Activated naive CD4-positive, alpha-beta T cell treated with anti-CD3 and anti-CD28 coated beads for 36 hours (primary cell): ENCODE measurements at regions of chr20 and their contacts with region 1.

Region 1: DNA sequence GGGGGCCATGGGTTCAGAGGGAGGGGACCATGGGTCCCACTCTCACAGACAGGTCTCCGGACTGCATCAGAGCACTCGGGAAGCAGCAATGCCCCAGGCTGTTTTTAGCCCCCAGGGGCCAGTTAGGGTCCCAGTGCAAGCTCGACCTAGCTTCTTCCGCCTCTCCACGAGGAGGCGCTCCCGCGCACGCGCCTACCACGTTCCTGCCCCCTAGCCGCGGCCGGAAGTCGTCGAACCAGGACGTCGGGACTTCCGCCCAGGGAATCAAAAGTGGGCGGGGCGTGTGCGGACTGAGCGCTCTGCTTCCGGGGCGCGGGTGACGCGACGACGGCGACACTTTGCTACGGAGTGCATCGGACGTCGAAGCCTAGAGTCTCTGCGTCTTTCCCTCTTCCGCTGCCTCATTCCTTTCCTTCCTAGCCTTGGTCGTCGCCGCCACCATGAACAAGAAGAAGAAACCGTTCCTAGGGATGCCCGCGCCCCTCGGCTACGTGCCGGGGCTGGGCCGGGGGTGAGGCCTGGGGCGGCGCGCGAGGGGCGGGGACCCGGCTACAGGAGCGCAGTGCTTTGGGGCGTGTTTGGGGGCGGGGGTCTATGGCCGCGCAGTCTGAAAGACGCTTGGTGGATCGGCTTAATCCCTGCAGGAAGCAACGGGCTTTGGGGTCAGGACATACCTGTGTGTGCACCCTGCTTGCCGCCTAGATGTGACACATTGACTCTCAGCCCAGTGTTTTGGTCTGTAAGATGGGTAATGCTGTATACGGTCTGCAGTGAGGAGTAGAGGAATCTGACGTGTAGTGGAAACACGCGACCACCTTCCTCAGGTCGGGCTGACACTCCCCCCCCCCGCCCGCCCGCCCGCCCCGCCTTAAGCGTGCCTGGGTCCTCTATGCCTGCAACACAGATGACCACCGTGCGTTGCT is at the start of gene PRPF6:
- DNase-seq: peak; percentile 97
- H3K4me3 Mint-ChIP-seq: peak within 1 kb of the TSS; percentile 84
- H3K27ac Mint-ChIP-seq: peak within 1 kb of the TSS; percentile 94
- H3K4me1 Mint-ChIP-seq: peaks cover 52% of the 10 kb centered on the region
- H3K27me3 Mint-ChIP-seq: no peaks in the 10 kb centered on the region
- total RNA-seq, gene PRPF6: 39.4 to 40.2 TPM

Region 2: GRCh38 chr20:63711085-63711645 is 269.9 kb before region 1 on chr20:
- CTCF ChIA-PET with region 1: no interaction called
- intact Hi-C with region 1: no loop called
- DNase-seq: no peak
- H3K4me3 Mint-ChIP-seq: no peak overlapping the region
- H3K27ac Mint-ChIP-seq: no peak overlapping the region
- H3K4me1 Mint-ChIP-seq: peaks cover 51% of the 10 kb centered on the region
- H3K27me3 Mint-ChIP-seq: no peaks in the 10 kb centered on the region

Region 3: GRCh38 chr20:63894358-63895201 is 86.5 kb before region 1 on chr20 and contains the start of gene DNAJC5:
- CTCF ChIA-PET with region 1: interaction called, 7 read pairs
- intact Hi-C with region 1: loop called (anchors 1 kb)
- DNase-seq: peak; percentile 94
- H3K4me3 Mint-ChIP-seq: peak within 1 kb of the TSS; percentile 95
- H3K27ac Mint-ChIP-seq: peak within 1 kb of the TSS; percentile 93
- H3K4me1 Mint-ChIP-seq: peaks cover 41% of the 10 kb centered on the region
- H3K27me3 Mint-ChIP-seq: no peaks in the 10 kb centered on the region
- total RNA-seq, gene DNAJC5: 19.4 to 19.5 TPM

Region 4: DNA sequence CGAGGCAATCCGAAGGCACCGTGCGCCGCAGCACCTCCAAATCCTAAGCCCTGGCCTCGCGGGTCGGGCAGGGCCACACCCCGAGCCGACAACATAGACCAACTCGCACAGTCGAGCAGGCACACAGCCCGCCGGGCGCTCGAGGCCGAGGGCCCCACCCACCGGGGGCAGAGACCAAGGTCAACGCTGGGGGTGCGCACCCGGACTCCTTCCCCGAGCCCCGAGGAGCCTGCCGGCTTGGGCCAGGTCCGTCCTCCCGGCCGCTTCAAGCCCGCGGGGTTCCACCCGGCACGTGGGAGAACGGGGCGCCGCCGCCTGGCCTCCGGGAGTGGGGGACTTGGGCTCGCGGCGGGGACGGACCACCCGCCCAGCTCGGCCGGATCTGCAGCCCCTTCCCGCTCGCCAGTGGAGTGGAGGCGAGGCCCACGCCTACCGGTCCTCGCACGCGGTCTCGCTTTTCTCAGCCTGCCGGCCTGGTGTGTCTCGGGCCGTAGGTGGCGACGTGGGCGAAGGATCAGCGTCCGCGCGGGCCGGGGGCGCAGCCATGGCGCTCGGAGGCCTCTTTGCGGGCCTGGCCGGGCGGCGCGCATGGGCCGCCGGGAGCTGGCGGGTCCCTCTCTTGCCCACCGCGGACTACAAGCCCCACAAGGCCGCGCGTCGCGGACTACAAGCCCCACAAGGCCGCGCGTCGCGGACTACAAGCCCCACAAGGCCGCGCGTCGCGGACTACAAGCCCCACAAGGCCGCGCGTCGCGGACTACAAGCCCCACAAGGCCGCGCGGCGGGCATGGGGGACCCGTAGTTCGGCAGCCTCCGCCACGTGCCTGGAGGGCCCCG is 25.0 kb before region 1 on chr20 and contains the start of gene UCKL1:
- CTCF ChIA-PET with region 1: interaction called, 4 read pairs
- intact Hi-C with region 1: loop called (anchors 1 kb)
- DNase-seq: peak; percentile 91
- H3K4me3 Mint-ChIP-seq: peak within 1 kb of the TSS; percentile 79
- H3K27ac Mint-ChIP-seq: peak within 1 kb of the TSS; percentile 85
- H3K4me1 Mint-ChIP-seq: peaks cover 39% of the 10 kb centered on the region
- H3K27me3 Mint-ChIP-seq: no peaks in the 10 kb centered on the region
- total RNA-seq, gene UCKL1: 23.3 to 23.9 TPM

Region 5: GRCh38 chr20:64062596-64063388 is 81.7 kb after region 1 on chr20 and contains the start of gene TCEA2:
- CTCF ChIA-PET with region 1: interaction called, 9 read pairs
- intact Hi-C with region 1: loop called (anchors 1 kb)
- DNase-seq: peak; percentile 98
- H3K4me3 Mint-ChIP-seq: peak within 1 kb of the TSS; percentile 89
- H3K27ac Mint-ChIP-seq: peak within 1 kb of the TSS; percentile 54
- H3K4me1 Mint-ChIP-seq: peaks cover 47% of the 10 kb centered on the region
- H3K27me3 Mint-ChIP-seq: no peaks in the 10 kb centered on the region
- total RNA-seq, gene TCEA2: 16.7 to 18.2 TPM

Region 6: DNA sequence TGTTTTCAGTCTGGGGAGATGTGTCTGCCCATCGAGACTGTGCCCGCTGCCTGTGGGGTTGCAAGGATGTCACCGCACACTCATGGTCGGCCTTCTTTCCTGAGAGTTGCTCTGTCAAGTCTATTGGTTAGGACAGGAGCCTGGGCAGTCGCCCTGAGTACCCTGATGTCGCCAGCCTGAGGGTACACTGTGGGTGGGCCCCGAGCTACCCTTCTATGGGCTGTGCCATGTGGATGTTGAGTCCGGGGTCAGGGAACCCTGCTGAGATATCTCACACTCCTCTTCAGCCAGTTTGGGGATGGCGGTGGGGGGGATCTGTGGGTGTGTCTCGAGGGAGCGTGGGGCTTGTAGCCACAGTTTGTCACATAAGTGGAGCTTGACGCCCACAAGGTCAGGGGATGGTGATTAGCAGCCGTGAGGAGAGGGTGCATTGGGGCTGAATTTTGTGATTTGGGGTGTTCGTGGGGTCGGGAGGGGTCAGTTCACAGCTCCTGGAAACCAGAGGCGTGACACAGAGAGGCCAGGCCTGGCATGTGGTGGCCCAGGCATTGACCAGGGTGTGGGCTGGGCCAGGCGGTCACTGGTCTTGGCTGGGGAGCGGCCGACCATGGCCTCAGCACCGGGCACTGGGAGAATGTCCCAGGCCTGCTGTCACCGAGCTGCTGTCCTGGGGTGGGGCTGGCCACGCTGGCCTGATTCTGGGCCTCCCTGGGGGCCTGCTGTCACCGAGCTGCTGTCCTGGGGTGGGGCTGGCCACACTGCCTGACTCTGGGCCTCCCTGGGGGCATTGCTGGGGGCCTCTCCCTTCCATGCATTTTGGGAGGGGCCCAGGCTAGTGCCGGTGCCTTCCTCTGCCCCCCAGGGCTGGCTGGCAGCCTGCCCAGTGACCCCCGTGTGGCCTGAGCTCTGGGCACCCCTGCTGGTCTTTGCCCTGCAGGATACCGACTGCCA is 127.9 kb after region 1 on chr20:
- CTCF ChIA-PET with region 1: no interaction called
- intact Hi-C with region 1: no loop called
- DNase-seq: no peak
- H3K4me3 Mint-ChIP-seq: no peak overlapping the region
- H3K27ac Mint-ChIP-seq: no peak overlapping the region
- H3K4me1 Mint-ChIP-seq: no peaks in the 10 kb centered on the region
- H3K27me3 Mint-ChIP-seq: no peaks in the 10 kb centered on the region

Region 7: DNA sequence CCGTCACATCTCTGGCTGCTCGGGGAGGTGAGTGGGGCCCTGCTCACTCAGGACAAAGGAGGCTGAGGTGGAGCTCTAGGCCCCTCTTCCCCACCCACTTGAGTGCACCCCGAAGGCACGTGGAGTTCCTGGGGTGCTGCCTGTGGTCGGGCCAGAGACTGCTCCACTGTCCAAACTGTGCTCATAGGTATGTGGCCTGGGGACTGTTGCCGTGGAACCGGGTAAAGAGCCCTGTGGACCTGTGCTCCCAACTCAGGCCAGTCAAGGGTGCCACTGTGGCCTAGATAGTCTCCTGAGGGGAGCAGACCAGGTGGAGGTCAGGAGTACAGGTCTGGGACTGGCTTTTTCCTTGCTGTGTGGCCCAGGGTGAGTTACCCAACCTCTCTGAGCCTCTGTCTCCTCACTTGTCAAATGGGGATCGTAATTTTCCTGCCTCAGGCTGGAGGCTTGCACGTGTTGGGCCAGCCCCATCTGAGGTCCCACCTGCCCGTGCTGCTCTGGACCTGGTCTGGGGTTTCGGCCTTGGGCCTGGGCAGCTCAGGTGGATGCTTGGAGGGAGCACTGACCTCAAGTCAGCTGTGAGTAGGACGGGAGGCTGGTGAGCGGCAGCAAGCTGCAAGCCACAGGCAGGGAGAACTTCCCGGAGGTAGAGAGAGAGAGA is 138.7 kb after region 1 on chr20:
- CTCF ChIA-PET with region 1: interaction called, 9 read pairs
- intact Hi-C with region 1: loop called (anchors 1 kb)
- DNase-seq: no peak
- H3K4me3 Mint-ChIP-seq: no peak overlapping the region
- H3K27ac Mint-ChIP-seq: peak overlapping the region; percentile 72
- H3K4me1 Mint-ChIP-seq: peaks cover 8% of the 10 kb centered on the region
- H3K27me3 Mint-ChIP-seq: no peaks in the 10 kb centered on the region